Transverse colon (tissue), 4 donors: ENCODE measurements at regions of chr5 and their contacts with region 1.

Region 1: DNA sequence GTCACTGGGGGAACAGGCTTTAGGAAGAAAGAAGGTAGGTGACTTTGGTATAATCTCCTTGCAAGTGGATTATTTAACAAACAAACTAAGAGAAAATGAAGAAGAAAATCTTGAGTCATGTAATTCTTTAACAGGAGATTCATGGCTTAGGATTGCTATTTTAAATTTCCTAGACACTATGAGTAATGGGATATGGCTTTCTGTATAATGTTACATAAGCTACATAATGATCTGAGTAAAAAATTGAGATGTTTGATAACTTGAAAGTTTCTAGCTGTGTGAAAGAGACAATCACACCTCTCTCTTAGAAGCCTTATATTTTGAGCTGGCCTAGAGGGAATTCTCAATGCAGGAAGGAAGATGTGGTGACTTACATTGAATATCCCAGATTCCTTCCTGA is 92.5 kb downstream of the CDH9 start:
- DNase-seq: no peak
- H3K4me3 ChIP-seq: no peak overlapping the region
- H3K27ac ChIP-seq: no peak overlapping the region
- H3K4me1 ChIP-seq: no peaks in the 10 kb centered on the region
- H3K27me3 ChIP-seq: no peaks in the 10 kb centered on the region
- CTCF ChIP-seq: no peak
- EP300 ChIP-seq: no peak
- POLR2A ChIP-seq: no peak

Region 2: GRCh38 chr5:28750251-28750650 is 1804.4 kb after region 1 on chr5:
- in situ Hi-C with region 1: no loop called
- intact Hi-C with region 1: loop called (anchors 5 kb)
- DNase-seq: no peak
- H3K4me3 ChIP-seq: no peak overlapping the region
- H3K27ac ChIP-seq: no peak overlapping the region
- H3K4me1 ChIP-seq: no peaks in the 10 kb centered on the region
- H3K27me3 ChIP-seq: no peaks in the 10 kb centered on the region
- CTCF ChIP-seq: no peak
- EP300 ChIP-seq: no peak
- POLR2A ChIP-seq: no peak